ENCODE measurements at regions of chr19 and their contacts with region 1.

Region 1: DNA sequence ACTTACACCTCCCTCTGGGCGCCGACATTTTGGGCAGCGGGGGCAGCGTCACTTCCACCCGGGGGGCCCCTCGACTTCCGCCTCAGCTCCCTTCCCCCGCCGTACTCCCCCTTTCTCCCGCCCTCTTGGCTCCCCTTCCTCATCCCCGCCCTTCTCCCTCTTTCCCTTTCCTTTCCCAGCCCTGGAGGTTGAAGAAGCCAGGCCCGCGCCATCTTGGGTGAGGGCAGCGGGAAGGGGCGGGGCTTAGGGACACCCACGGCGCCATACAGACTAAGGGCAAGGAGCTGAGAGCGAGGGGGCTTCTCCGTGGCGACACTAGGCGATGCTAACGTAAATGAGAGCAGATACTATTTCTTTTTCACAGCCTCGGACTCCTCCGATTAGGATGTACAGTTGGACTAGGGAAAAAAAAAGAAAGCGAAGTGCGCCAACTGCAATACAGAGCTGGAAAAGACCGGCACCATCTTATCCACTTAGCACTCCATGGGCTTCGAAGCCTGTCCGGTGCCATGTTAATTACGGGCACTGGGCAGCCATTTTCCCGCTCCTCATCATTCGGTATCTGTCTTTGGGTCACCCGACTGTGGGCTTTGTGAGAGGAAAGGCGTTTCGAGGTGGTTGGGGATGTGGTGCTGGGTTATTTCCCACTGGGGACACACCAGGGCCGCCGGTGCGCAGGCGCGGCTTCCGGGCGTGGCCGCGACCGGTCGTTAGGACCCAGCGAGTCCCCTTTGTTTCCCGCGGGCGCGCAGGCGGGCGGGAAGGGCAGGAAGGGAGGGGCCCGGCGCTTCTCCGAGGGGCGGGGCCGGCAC is at the start of gene FIZ1:
- DNase-seq: peak; percentile 98
- ATAC-seq: peak; percentile 54
- H3K4me3 Mint-ChIP-seq: peak within 1 kb of the TSS; percentile 98
- H3K27ac Mint-ChIP-seq: peak within 1 kb of the TSS; percentile 100
- H3K4me1 Mint-ChIP-seq: peaks cover 29% of the 10 kb centered on the region
- H3K27me3 Mint-ChIP-seq: no peaks in the 10 kb centered on the region; the same call in 1 of the 2 replicates
- CTCF ChIP-seq: no peak
- total RNA-seq, gene FIZ1: 20.1 to 22.7 TPM (median 20.6 TPM) in 3 replicates

Region 2: GRCh38 chr19:55476100-55476775 is 123.4 kb before region 1 on chr19 and contains the start of gene ZNF628:
- CTCF ChIA-PET with region 1: no interaction called
- POLR2A ChIA-PET with region 1: interaction called, 15 read pairs
- DNase-seq: peak; percentile 99
- ATAC-seq: peak; percentile 88
- H3K4me3 Mint-ChIP-seq: peak within 1 kb of the TSS; percentile 85
- H3K27ac Mint-ChIP-seq: peak within 1 kb of the TSS; percentile 81
- H3K4me1 Mint-ChIP-seq: peaks cover 27% of the 10 kb centered on the region
- H3K27me3 Mint-ChIP-seq: peaks cover 9% of the 10 kb centered on the region
- CTCF ChIP-seq: no peak
- total RNA-seq, gene ZNF628: 14.0 to 23.6 TPM (median 17.8 TPM) in 3 replicates

Region 3: GRCh38 chr19:55586976-55587668 is 12.6 kb before region 1 on chr19:
- CTCF ChIA-PET with region 1: interaction called, 4 read pairs
- POLR2A ChIA-PET with region 1: interaction called, 17 read pairs
- DNase-seq: peak; percentile 98
- ATAC-seq: peak; percentile 90
- H3K4me3 Mint-ChIP-seq: peak overlapping the region; percentile 75
- H3K27ac Mint-ChIP-seq: no peak overlapping the region
- H3K4me1 Mint-ChIP-seq: peaks cover 36% of the 10 kb centered on the region
- H3K27me3 Mint-ChIP-seq: peaks cover 33% of the 10 kb centered on the region
- CTCF ChIP-seq: no peak

Region 4: DNA sequence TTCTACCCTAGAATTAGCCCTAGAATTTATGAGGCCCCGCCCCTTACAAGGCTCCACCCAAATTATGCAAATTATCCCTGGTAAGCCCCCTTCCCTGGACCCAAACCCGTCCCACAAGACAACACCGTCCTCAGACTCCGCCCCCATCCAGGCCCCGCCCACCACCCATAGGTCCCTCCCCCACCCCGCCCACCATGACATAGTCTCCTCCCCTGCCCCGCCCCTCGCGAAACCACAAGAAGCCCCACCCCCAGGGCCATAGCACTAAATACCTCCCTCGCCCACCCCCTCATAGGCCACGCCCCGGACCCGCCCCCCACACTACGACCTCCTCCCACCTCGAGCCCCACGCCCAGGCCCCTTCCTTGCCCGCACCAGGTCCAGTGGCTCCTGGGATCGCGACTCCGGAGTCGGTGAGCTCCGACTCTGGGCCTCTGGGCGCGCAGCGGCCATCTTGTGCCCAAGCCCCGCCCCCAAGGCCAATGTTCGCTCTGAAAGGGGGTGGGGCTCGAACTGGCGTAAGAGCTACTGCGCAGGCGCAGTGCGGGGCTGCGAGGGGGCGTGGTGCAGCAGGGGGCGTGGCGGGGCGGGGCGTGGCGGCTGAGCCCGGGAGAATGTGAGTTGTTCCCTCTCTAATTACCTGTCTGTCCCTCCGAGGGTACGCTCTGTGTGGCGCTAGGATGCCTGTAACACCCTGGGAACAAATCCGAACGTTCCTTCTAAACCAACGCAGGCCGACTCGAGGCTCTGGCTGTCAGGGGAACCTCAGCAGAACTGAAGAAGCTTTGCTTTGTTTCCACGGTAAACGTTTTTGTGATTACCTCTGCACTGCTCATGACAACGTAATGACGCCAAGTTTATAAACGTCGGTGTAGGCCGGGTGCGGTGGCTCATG is 24.7 kb after region 1 on chr19 and contains the start of gene ZNF784:
- CTCF ChIA-PET with region 1: interaction called, 7 read pairs
- POLR2A ChIA-PET with region 1: interaction called, 12 read pairs
- DNase-seq: peak; percentile 92
- ATAC-seq: peak; percentile 87
- H3K4me3 Mint-ChIP-seq: peak within 1 kb of the TSS; percentile 76
- H3K27ac Mint-ChIP-seq: peak within 1 kb of the TSS; percentile 90
- H3K4me1 Mint-ChIP-seq: peaks cover 15% of the 10 kb centered on the region
- H3K27me3 Mint-ChIP-seq: peaks cover 18% of the 10 kb centered on the region
- CTCF ChIP-seq: no peak
- total RNA-seq, gene ZNF784: 9.9 to 12.1 TPM (median 11.4 TPM) in 3 replicates

Region 5: GRCh38 chr19:55632463-55632834 is 32.8 kb after region 1 on chr19:
- CTCF ChIA-PET with region 1: interaction called, 55 read pairs
- POLR2A ChIA-PET with region 1: no interaction called
- DNase-seq: peak; percentile 92
- ATAC-seq: peak; percentile 61
- H3K4me3 Mint-ChIP-seq: peak overlapping the region; percentile 20; the same call in 1 of the 2 replicates
- H3K27ac Mint-ChIP-seq: peak overlapping the region; percentile 80
- H3K4me1 Mint-ChIP-seq: peaks cover 29% of the 10 kb centered on the region
- H3K27me3 Mint-ChIP-seq: peaks cover 9% of the 10 kb centered on the region; the same call in 1 of the 2 replicates
- CTCF ChIP-seq: peak; percentile 87

Region 6: GRCh38 chr19:55688422-55689246 is 89.0 kb after region 1 on chr19:
- CTCF ChIA-PET with region 1: no interaction called
- POLR2A ChIA-PET with region 1: no interaction called
- DNase-seq: no peak
- ATAC-seq: peak; percentile 35
- H3K4me3 Mint-ChIP-seq: no peak overlapping the region
- H3K27ac Mint-ChIP-seq: no peak overlapping the region
- H3K4me1 Mint-ChIP-seq: no peaks in the 10 kb centered on the region
- H3K27me3 Mint-ChIP-seq: no peaks in the 10 kb centered on the region
- CTCF ChIP-seq: no peak